ENCODE measurements at regions of chr16 and their contacts with region 1.

Region 1: DNA sequence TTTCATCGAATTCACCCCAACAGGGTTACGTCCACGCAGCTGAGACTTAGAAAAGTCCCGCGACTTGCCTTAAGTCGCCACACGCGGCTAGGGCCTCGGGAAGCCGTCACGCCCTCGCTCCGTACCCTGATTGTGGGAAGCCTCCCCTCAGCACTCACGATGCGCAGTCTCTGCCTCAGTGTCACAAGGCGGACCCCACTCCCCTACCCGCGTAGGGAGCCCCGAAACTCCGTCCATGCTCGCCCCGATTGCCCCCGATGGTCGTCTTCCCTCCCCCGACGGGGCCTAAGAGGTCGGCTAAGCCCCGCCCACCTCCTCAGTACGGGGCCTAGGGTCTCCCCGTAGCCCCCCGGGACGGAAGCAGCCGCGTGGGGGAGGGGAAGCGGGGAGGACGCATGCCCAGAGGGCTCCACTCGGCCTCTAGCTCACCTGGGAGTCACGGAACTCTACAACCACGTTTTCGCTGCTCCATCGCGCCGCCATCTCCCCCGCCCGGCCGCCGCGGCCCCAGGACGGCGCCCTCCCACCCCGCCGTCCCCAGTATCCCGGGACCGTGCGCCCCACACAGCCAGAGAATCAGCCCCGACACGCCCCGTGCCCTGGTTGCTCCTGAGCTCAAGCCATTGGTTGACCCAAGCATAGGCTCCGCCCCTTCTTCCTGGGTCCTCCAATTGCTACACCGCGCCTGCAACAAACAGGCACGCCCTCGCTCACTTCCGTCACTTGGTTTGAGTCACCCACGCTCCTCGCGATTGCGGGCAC is at the start of gene WDR59:
- DNase-seq: peak; percentile 95 to 100 (median 99)
- ATAC-seq: peak; percentile 98
- H3K4me3 ChIP-seq: peak within 1 kb of the TSS; percentile 82 to 99
- H3K4me3 Mint-ChIP-seq: peak within 1 kb of the TSS; percentile 93
- H3K27ac ChIP-seq: peak within 1 kb of the TSS; percentile 66 to 67
- H3K27ac Mint-ChIP-seq: peak within 1 kb of the TSS; percentile 90
- H3K4me1 ChIP-seq: peaks cover 7% of the 10 kb centered on the region
- H3K4me1 Mint-ChIP-seq: peaks cover 23% of the 10 kb centered on the region
- H3K27me3 ChIP-seq: no peaks in the 10 kb centered on the region
- H3K27me3 Mint-ChIP-seq: no peaks in the 10 kb centered on the region
- CTCF ChIP-seq: no peak
- total RNA-seq, gene WDR59: 60.1 to 60.8 TPM

Region 2: DNA sequence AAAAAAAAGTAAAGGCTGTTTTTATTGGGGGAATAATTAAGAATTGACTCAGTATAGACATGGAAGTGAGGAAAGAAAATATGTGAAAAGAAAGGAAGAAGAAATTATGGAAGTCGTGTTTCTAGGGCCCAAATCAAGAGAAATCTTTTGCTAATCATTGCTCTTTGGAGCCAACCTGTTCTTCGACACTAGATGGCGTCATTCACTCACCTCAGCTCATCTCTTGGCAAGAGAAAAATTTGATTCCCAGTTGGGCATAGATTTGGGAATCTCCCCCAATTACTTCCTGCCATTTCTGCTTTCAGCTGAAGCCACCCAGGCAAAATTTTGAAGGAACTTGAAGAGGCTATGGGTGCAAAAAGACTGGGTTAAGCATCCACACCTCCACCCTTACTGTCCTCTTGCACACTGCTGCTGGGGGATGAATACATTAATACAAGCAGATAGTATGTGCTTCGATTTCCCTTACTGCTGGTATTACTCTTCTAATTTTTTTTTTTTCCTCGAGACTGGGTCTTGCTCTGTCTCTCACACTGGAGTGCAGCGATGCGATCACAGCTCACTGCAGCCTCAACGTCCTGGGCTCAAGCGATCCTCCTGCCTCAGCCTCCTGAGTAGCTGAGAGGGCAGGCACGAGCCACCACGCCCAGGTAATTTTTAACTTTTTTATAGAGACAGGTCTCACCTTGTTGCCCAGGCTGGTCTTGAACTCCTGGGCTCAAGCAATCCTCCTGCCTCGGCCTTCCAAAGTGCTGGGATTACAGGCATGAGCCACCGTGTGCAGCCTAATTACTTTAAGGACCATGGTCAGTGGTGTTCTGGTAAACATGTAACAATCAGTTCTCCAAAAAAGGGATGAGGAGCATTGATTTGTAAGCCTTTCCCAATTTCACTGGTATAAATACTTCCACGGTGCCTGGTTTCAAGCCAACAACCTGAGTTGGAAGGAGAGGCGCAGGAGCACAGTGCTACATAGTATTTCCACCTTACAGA is 674.6 kb before region 1 on chr16:
- CTCF ChIA-PET with region 1: no interaction called
- POLR2A ChIA-PET with region 1: no interaction called
- intact Hi-C with region 1: loop called in 1 of 2 experiments (anchors 10 kb)
- DNase-seq: peak in 2 of 9 experiments; percentile 48 to 62
- ATAC-seq: no peak
- H3K4me3 ChIP-seq: no peak overlapping the region
- H3K4me3 Mint-ChIP-seq: no peak overlapping the region
- H3K27ac ChIP-seq: no peak overlapping the region
- H3K27ac Mint-ChIP-seq: no peak overlapping the region
- H3K4me1 ChIP-seq: no peaks in the 10 kb centered on the region
- H3K4me1 Mint-ChIP-seq: no peaks in the 10 kb centered on the region
- H3K27me3 ChIP-seq: no peaks in the 10 kb centered on the region
- H3K27me3 Mint-ChIP-seq: no peaks in the 10 kb centered on the region
- CTCF ChIP-seq: peak; percentile 63

Region 3: DNA sequence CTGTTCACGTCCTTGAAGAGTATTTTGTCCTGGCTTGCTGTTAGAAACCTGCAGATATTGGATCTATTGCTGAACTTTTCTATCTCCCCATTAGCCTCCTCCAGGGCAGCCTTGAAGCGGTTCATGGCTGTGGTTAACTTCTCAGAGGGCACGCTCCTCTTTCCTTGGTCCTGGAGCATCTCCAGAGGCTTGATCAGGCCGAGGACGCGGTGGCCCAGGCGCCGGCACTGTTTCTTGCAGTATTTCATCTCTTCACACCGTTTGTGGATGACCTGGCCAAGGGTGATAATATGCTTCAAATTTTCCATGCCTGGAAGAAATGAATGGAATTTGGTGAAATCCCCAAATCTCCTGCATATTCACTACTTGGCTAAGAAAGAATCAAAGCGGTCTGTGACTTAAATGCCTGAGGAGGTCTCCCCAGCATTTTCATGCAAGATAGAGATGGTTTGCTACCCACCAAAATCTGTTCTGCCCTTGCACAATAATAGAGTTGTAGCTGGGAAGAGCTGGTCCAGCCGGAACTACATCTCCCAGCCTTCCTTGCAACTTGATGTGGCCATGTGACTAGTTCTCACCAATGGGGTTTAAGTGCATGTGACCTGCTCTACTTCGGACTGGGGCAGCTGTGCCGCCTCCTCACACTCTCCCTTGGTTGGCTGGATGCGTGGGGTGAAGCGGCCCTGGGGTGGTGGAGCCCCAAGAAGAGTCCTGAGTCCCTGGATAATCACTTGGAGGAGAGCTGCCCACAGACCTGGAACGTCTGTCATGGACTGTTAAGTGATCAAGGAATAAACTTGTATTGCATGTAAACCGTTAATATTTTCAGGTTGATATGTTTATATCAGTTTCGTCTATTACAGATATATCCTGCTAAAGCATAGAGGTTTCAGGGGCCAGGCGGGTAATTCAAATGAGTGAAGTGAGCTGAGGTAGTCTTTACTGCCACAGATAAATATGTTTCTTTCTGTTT is 289.0 kb before region 1 on chr16:
- CTCF ChIA-PET with region 1: no interaction called
- POLR2A ChIA-PET with region 1: no interaction called
- intact Hi-C with region 1: loop called (anchors 5 to 10 kb)
- DNase-seq: peak; percentile 18 to 85 (median 57)
- ATAC-seq: peak; percentile 71
- H3K4me3 ChIP-seq: peak overlapping the region; percentile 21 to 28
- H3K4me3 Mint-ChIP-seq: peak overlapping the region; percentile 78
- H3K27ac ChIP-seq: no peak overlapping the region
- H3K27ac Mint-ChIP-seq: peak overlapping the region; percentile 70
- H3K4me1 ChIP-seq: peaks cover 18% of the 10 kb centered on the region
- H3K4me1 Mint-ChIP-seq: peaks cover 55% of the 10 kb centered on the region
- H3K27me3 ChIP-seq: no peaks in the 10 kb centered on the region
- H3K27me3 Mint-ChIP-seq: no peaks in the 10 kb centered on the region
- CTCF ChIP-seq: no peak

Region 4: DNA sequence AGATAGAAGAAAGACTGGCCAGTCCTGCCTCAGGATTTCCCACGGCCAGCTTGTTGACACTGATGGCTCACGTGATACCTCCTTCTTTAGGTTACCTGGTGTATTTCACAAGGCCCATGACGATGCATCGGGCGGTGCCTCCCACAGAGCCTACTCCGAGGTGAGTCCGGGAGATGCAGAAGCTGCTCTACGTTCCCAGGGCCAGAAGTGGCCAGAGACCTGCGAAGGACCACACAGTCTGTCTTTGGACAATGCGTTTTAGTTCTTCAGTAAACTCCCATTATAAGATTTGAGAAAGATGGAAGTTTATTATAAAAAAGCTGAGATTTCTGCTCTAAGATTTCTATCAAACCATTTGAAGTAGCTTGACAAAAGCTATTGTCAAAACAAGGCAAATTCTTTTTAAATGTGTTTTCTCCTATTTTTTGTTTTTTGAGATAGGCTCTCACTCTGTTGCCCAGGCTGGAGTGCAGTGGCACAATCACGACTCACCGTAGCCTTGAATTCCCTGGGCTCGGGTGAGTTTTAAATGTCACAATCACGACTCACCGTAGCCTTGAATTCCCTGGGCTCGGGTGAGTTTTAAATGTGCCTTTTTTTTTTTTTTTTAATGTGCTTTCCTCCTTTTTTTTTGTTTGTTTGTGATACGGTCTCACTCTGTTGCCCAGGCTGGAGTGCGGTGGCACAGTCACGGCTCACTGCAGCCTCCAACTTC is 140.8 kb before region 1 on chr16:
- CTCF ChIA-PET with region 1: no interaction called
- POLR2A ChIA-PET with region 1: no interaction called
- intact Hi-C with region 1: no loop called
- DNase-seq: no peak
- ATAC-seq: no peak
- H3K4me3 ChIP-seq: no peak overlapping the region
- H3K4me3 Mint-ChIP-seq: no peak overlapping the region
- H3K27ac ChIP-seq: no peak overlapping the region
- H3K27ac Mint-ChIP-seq: no peak overlapping the region
- H3K4me1 ChIP-seq: no peaks in the 10 kb centered on the region
- H3K4me1 Mint-ChIP-seq: peaks cover 2% of the 10 kb centered on the region
- H3K27me3 ChIP-seq: no peaks in the 10 kb centered on the region
- H3K27me3 Mint-ChIP-seq: peaks cover 4% of the 10 kb centered on the region
- CTCF ChIP-seq: no peak

Region 5: GRCh38 chr16:74998481-74999218 is 13.9 kb after region 1 on chr16 and contains the start of gene ZNRF1:
- CTCF ChIA-PET with region 1: interaction called, 15 read pairs
- POLR2A ChIA-PET with region 1: interaction called, 9 read pairs
- intact Hi-C with region 1: loop called (anchors 1 kb)
- DNase-seq: peak; percentile 61 to 89 (median 79)
- ATAC-seq: peak; percentile 82
- H3K4me3 ChIP-seq: peak within 1 kb of the TSS; percentile 58 to 79
- H3K4me3 Mint-ChIP-seq: peak within 1 kb of the TSS; percentile 90
- H3K27ac ChIP-seq: peak within 1 kb of the TSS in 1 of 2 experiments; percentile 37
- H3K27ac Mint-ChIP-seq: peak within 1 kb of the TSS; percentile 85
- H3K4me1 ChIP-seq: peaks cover 20% of the 10 kb centered on the region
- H3K4me1 Mint-ChIP-seq: peaks cover 15% of the 10 kb centered on the region
- H3K27me3 ChIP-seq: peaks cover 0 to 7% of the 10 kb centered on the region in 2 experiments
- H3K27me3 Mint-ChIP-seq: no peaks in the 10 kb centered on the region
- CTCF ChIP-seq: peak; percentile 60
- total RNA-seq, gene ZNRF1: 1.7 to 2.0 TPM

Region 6: GRCh38 chr16:75043175-75043895 is 58.6 kb after region 1 on chr16:
- CTCF ChIA-PET with region 1: no interaction called
- POLR2A ChIA-PET with region 1: no interaction called
- intact Hi-C with region 1: no loop called
- DNase-seq: no peak
- ATAC-seq: no peak
- H3K4me3 ChIP-seq: no peak overlapping the region
- H3K4me3 Mint-ChIP-seq: no peak overlapping the region
- H3K27ac ChIP-seq: no peak overlapping the region
- H3K27ac Mint-ChIP-seq: peak overlapping the region; percentile 43
- H3K4me1 ChIP-seq: no peaks in the 10 kb centered on the region
- H3K4me1 Mint-ChIP-seq: peaks cover 10% of the 10 kb centered on the region
- H3K27me3 ChIP-seq: no peaks in the 10 kb centered on the region
- H3K27me3 Mint-ChIP-seq: no peaks in the 10 kb centered on the region
- CTCF ChIP-seq: no peak

Region 7: DNA sequence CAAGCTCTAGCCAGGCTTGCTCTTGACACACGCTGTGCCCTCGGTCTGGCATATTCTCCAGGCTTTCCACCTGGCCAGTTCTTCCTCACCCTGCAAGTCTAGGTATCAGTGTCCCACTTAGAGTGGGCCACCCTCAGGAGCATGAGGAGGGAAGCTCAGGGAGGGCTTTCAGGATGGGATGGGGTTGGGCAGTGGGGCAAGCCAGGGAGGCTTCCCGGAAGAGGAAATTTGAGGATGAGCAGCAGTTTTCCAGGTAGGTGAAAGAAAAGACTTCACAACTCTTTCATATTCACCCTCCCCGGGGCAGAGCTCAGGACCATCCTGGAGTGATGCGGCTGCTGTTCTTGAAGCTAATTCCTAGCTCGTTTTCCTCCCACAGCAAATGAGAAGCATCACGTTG is 146.4 kb after region 1 on chr16:
- CTCF ChIA-PET with region 1: no interaction called
- POLR2A ChIA-PET with region 1: no interaction called
- intact Hi-C with region 1: no loop called
- DNase-seq: no peak
- ATAC-seq: no peak
- H3K4me3 ChIP-seq: no peak overlapping the region
- H3K4me3 Mint-ChIP-seq: no peak overlapping the region
- H3K27ac ChIP-seq: no peak overlapping the region
- H3K27ac Mint-ChIP-seq: no peak overlapping the region
- H3K4me1 ChIP-seq: peaks cover 10% of the 10 kb centered on the region
- H3K4me1 Mint-ChIP-seq: peaks cover 18% of the 10 kb centered on the region
- H3K27me3 ChIP-seq: no peaks in the 10 kb centered on the region
- H3K27me3 Mint-ChIP-seq: peaks cover 3% of the 10 kb centered on the region
- CTCF ChIP-seq: no peak

Region 8: GRCh38 chr16:75148311-75149195 is 163.8 kb after region 1 on chr16 and contains the start of gene ZFP1:
- CTCF ChIA-PET with region 1: no interaction called
- POLR2A ChIA-PET with region 1: interaction called, 5 read pairs
- intact Hi-C with region 1: loop called (anchors 1 kb)
- DNase-seq: peak; percentile 86 to 98 (median 95)
- ATAC-seq: peak; percentile 89
- H3K4me3 ChIP-seq: peak within 1 kb of the TSS; percentile 85 to 100
- H3K4me3 Mint-ChIP-seq: peak within 1 kb of the TSS; percentile 87
- H3K27ac ChIP-seq: peak within 1 kb of the TSS; percentile 84
- H3K27ac Mint-ChIP-seq: peak within 1 kb of the TSS; percentile 88
- H3K4me1 ChIP-seq: peaks cover 12% of the 10 kb centered on the region
- H3K4me1 Mint-ChIP-seq: peaks cover 16% of the 10 kb centered on the region
- H3K27me3 ChIP-seq: no peaks in the 10 kb centered on the region
- H3K27me3 Mint-ChIP-seq: no peaks in the 10 kb centered on the region
- CTCF ChIP-seq: no peak
- total RNA-seq, gene ZFP1: 11.9 to 12.9 TPM

Region 9: DNA sequence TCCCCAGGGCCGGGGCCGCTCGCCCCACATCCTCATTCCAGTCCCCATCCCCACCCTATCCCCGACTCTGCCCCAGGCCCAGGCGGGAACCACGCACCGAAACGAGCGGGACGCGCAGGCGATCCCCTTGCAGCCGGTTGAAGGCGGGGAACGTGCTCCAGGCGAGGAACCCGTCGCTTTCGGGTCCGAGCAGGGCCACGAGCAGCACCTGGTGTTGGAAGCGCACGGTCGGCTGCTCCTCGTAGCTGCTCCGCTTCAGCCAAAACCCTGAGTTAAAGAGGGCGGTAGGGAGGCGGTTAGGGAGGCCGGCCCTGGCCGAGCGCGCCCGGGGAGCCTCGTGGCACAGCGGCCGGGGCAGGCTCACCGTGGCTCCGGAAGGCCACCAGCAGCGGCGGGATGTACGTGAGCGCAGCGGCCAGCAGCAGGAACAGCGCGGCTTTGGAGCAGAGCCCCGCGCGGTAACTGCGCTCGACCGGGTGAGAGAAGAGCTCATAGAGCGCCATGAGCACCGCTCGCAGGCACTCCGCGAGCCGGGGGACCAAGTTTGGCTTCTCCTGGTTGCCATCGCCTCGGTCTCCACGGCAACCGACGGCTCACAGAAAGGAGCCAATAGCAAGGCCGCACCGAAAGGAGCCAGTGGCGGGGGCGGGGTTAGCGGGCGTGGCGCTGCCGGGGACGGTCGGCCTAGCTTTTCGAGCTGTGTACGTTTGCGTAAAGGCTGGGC is 571.2 kb after region 1 on chr16 and contains the start of gene TMEM231:
- CTCF ChIA-PET with region 1: no interaction called
- POLR2A ChIA-PET with region 1: no interaction called
- intact Hi-C with region 1: loop called (anchors 5 to 10 kb)
- DNase-seq: peak; percentile 95 to 98 (median 97)
- ATAC-seq: peak; percentile 96
- H3K4me3 ChIP-seq: peak within 1 kb of the TSS; percentile 61 to 69
- H3K4me3 Mint-ChIP-seq: peak within 1 kb of the TSS; percentile 86
- H3K27ac ChIP-seq: peak within 1 kb of the TSS; percentile 65 to 70
- H3K27ac Mint-ChIP-seq: peak within 1 kb of the TSS; percentile 88
- H3K4me1 ChIP-seq: peaks cover 12% of the 10 kb centered on the region
- H3K4me1 Mint-ChIP-seq: peaks cover 14% of the 10 kb centered on the region
- H3K27me3 ChIP-seq: no peaks in the 10 kb centered on the region
- H3K27me3 Mint-ChIP-seq: peaks cover 9% of the 10 kb centered on the region
- CTCF ChIP-seq: no peak
- total RNA-seq, gene TMEM231: 2.1 to 2.8 TPM

Measured in CD8-positive, alpha-beta T cell (primary cell).